ENCODE measurements at regions of chr4 and their contacts with region 1.

Region 1: DNA sequence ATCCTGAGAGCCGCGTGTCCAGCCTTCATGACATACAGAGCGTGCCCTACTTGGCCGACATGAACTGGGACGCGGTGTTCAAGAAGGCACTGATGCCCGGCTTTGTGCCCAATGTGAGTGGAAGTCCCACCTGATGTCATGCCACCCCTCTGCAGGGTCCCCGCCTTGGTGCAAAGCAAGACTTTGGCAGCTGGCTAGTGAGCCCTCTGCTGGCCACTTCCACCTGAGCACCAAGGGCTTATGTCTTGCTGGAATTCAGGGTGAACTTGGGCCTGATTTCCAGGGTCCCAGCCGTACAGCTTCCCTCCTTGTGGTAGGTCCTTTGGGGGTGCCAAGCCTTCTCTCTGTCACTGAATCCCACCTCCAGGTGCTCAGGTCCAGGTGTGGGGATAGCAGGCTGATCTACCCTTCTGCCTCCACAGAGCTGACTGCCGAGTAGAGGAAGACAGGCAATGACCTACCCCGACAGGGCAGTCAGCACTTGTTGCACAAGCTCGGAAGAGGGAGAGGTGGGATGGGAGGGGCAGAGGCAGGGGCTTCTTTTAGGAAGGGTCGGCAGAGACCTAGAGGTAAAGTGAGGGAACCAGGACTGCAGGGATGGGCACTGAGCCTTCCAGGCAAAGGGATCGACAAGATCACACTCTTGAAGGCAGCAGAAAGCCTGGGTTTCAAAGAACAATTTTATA is 248.1 kb downstream of the EVC2 start:
- DNase-seq: peak; percentile 52
- H3K4me3 ChIP-seq: no peak overlapping the region
- H3K27ac ChIP-seq: no peak overlapping the region
- H3K4me1 ChIP-seq: no peaks in the 10 kb centered on the region
- H3K27me3 ChIP-seq: no peaks in the 10 kb centered on the region
- CTCF ChIP-seq: peak; percentile 77

Region 2: DNA sequence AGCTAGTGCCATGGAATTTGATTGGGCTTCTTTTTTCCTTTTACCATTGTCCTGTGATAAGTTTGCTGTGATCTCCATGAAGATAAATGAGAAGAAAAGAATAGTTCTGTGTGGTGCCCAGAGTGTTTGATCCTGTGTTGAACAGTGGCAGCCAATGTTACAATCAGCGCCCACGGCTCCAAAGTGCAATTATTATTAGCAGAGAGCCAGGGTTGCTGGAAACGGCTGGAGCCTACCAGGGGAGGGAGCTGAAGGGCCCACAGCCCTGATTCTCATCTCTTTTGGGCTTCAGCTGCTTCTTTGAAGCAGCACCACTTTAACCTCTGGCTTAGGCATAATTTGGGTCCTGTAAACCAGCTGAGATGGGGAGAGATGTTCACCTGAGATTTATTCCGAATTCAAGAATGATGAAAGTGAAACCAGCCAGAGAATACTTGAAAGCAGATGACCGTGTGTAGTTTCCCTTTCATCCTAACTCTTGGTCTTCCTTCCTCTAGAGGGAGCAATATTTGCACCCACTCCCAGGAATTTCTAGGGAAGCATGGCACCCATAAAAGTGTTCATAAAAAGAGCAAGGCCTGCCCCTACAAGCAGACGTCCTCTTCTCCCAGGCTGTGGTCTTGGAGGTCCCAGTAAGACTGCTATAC is 50.2 kb before region 1 on chr4:
- CTCF ChIA-PET with region 1: interaction called, 10 read pairs
- POLR2A ChIA-PET with region 1: no interaction called
- intact Hi-C with region 1: no loop called
- DNase-seq: no peak
- H3K4me3 ChIP-seq: no peak overlapping the region
- H3K27ac ChIP-seq: no peak overlapping the region
- H3K4me1 ChIP-seq: no peaks in the 10 kb centered on the region
- H3K27me3 ChIP-seq: no peaks in the 10 kb centered on the region
- CTCF ChIP-seq: peak; percentile 30; the same call in 1 of the 2 replicates

Region 3: DNA sequence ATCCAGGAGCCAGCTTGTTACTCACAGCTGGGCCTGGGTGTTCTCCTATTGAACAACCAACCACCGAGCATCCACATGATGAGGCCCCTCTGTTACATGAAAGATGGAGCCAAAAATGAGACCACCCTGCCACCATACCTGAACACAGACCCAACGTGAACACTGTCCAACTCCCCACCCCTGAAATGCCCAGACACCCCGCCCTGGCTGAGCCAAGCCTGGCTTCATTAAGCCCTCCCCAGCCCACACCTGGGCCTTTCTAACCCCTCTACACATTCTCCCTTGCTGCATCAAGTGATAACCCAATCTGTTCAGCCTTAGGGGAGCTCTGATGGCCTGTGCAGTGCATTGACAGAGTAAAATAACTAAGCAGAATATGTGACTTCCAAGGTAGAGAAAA is 331.4 kb after region 1 on chr4:
- CTCF ChIA-PET with region 1: no interaction called
- POLR2A ChIA-PET with region 1: no interaction called
- intact Hi-C with region 1: loop called (anchors 5 kb)
- DNase-seq: no peak
- H3K4me3 ChIP-seq: no peak overlapping the region
- H3K27ac ChIP-seq: no peak overlapping the region
- H3K4me1 ChIP-seq: no peaks in the 10 kb centered on the region
- H3K27me3 ChIP-seq: no peaks in the 10 kb centered on the region
- CTCF ChIP-seq: no peak

Measured in A673 (cell line).